A549 (cell line): ENCODE measurements at regions of chr22 and their contacts with region 1.

Region 1: DNA sequence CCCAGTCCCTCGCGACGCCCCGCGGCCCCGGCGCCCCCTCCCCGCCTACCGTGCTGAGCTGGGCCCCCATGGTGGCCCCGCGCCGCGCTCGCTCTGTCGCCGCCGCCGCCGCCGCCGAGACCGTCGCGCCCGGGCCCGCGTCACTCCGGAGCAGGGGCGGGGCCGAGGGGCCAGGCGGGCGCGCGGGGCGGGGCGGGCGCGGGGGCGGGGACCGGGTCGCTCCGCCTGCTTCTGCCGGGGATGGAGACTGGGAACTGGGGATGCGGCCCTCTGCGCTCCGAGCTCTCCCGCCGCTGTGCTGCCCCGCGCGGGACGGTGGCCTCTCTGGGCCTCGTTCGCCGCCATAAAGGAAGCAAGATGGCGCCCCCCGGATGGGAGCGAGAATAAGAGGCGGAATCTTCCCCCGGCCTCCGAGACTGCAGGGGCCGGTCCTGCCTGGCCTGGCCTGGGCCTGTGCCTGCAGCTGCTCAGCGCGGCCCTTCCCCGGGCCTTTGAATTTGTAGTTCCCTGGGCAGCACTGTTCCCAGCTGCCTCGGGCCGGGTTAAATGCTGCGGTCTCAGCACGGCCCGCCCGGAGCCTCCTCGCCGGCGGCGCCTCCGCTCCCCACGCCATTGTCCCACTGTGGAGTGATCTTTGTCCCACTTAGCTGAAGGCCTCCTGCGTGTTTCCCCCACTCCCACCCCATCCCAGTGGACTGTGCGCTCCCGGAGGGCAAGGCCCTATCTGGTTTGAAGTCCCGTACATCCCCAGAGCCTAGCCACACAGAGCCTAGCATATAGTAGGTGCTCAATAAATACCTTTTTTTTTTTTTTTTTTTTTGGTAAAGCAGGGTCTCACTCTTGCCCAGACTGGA is at the start of gene CYB5R3:
- DNase-seq: peak; percentile 65 to 83
- ATAC-seq: peak; percentile 87 to 91
- H3K4me3 ChIP-seq: peak within 1 kb of the TSS; percentile 85
- H3K27ac ChIP-seq: peak within 1 kb of the TSS; percentile 96 to 97
- H3K4me1 ChIP-seq: peaks cover 37% of the 10 kb centered on the region
- CTCF ChIP-seq: no peak
- EP300 ChIP-seq: no peak
- POLR2A ChIP-seq: no peak; the same call in 1 of the 2 replicates
- RAD21 ChIP-seq: no peak; a peak in 1 of 5 replicates
- polyA plus RNA-seq, gene CYB5R3: 30.8 and 39.4 TPM in 2 replicates

Region 2: GRCh38 chr22:42614312-42615091 is 35.0 kb before region 1 on chr22 and contains the start of gene POLDIP3:
- CTCF ChIA-PET with region 1: interaction called, 3 read pairs
- POLR2A ChIA-PET with region 1: interaction called, 13 read pairs
- DNase-seq: peak; percentile 81 to 97
- ATAC-seq: peak; percentile 83 to 84
- H3K4me3 ChIP-seq: peak within 1 kb of the TSS; percentile 93
- H3K27ac ChIP-seq: peak within 1 kb of the TSS; percentile 91 to 98
- H3K4me1 ChIP-seq: peaks cover 25% of the 10 kb centered on the region
- CTCF ChIP-seq: no peak
- EP300 ChIP-seq: no peak
- POLR2A ChIP-seq: 0 out of 2 replicates have a peak, but pooled peaks have one; percentile 31
- RAD21 ChIP-seq: no peak; a peak in 1 of 5 replicates
- polyA plus RNA-seq, gene POLDIP3: 31.8 and 42.0 TPM in 2 replicates

Region 3: GRCh38 chr22:42635531-42635930 is 13.9 kb before region 1 on chr22:
- CTCF ChIA-PET with region 1: interaction called, 10 read pairs
- POLR2A ChIA-PET with region 1: interaction called, 13 read pairs
- DNase-seq: peak; percentile 44 to 71
- ATAC-seq: peak; percentile 86 to 87
- H3K4me3 ChIP-seq: no peak overlapping the region
- H3K27ac ChIP-seq: peak overlapping the region; percentile 72 to 73
- H3K4me1 ChIP-seq: peaks cover 17% of the 10 kb centered on the region
- CTCF ChIP-seq: no peak
- EP300 ChIP-seq: no peak
- POLR2A ChIP-seq: no peak
- RAD21 ChIP-seq: no peak